Cardiac septum (tissue), 1 donor: ENCODE measurements at regions of chr15 and their contacts with region 1.

Region 1: GRCh38 chr15:100873029-100873677 is 6.5 kb upstream of the ALDH1A3 start:
- DNase-seq: no peak

Region 2: DNA sequence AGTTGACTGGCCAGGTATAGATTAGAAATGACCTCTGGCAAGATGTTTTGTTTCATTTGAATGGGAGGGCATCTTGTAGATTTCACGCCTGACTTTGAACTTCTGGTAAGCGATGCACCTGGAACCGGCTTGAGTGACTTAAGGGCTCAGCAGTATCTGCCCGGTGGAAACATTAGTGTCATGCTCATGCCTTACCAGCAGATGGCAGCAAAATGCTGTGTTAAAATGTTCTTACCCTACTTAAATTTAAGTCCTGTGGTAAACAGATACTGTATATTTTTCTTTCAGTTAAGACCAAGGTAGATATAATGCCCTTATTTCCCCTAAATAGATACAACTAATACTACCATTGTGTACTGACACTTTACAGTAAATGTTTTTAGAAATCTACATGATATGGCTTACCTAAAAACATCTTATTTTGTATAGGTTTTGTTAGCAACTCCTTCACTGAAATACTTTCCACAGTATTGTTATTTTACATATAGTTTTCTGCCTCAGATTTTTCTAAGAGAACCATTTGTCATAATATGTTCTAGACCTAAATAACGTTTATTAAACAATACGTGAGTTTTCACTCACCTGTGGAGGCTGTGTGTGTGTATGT is 245.3 kb before region 1 on chr15:
- intact Hi-C with region 1: loop called (anchors 2 kb)
- DNase-seq: no peak

Region 3: DNA sequence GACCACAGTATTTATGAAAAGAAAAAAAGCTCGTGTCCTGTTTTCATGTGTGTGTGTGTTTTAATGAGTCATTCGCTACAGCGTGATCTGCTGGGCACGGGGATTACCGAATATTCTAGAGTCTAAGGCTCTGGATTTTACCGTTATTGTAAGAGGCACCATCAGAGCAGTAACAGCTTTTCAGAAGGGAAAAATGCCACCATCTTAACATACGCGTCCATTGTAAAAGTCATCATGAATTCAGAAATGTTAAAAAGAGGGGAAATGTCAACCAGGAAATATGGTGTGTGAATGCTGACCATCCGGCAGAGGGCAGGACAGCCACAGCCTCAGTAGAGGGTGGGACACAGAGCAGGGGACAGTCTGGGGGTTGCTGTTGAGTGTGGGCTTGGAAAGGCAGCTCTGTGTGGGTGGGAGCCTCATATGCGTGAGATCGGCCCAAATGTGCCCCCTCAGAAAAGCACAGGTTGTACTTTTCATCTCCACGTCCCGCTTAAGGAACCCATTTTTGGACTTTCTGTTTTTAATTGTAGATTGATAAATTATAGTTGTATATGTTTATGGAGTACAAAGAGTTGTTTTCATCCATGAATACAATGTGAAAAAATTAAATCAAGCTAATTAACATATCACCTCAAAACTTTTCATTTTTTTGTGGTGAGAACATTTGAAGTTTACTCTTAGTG is 201.2 kb before region 1 on chr15:
- intact Hi-C with region 1: loop called (anchors 5 kb)
- DNase-seq: no peak

Region 4: DNA sequence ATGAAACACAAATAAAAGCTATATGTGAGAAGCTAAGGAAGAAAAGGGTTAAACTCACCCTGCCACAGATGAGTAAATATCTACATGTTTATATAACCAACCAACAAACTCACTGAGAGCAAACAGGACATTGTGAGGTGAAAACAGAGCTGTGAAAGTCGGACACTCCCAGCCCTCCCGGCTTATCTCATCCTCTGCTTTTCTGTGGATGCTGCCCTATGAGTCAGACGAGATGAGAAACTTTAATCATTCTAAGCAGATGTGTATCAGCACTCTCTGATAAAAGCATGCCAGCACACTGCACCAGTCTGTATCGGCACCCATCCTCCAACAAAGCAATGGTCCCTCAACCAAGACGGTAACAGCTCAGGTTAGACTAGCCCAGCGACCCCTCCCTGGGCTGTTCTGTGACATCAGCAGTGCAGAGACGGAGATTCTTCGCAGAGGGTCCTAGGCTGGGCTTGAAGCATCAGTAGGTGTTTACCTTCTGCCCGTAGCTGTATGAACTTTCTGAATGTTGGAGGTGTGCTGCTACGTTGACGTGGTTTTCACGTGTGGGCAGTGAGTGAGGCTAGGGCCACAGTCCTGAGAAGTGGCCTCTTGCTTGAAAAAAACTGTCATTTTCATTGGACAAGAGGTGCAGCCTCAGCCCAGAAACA is 113.3 kb before region 1 on chr15:
- intact Hi-C with region 1: no loop called
- DNase-seq: peak; percentile 57